Naive thymus-derived CD4-positive, alpha-beta T cell (primary cell): ENCODE measurements at regions of chr5 and their contacts with region 1.

Region 1: DNA sequence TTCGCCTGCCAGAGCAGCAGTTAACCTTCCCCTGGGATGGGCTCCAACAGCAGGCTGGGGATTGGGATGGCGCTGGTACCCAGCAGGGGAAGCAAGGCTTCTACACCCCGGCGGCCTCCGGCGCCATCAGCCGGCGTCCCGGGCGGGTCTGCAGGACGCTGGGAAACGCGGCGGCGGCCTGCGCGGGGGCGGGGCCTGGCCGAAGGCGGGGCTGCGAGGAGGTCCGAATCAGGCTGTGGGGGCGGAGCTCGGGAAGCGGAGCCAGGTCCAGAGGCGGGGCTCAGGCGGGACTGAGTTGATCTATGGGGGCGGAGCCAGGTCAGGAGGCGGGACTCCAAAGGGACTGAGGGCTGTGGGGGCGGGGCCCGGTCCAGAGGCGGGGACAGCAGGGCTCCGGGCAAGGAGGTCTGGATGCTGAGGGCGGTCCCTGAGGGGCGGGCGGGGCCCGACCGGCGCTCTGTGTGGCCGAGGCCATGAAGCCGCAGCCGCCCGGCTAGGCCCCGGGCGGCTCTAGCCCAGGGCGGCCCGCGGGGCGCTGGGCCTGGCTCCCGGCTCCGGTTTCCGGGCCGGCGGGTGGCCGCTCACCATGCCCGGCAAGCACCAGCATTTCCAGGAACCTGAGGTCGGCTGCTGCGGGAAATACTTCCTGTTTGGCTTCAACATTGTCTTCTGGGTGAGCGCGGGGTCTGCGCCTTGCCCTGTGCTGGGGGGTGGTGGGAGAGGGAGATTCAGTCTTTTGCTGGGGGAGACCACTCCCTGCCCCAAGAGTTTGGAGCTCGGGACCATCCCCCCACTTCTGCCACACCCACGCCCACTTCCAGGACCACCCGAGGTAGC is at the start of gene TSPAN17:
- DNase-seq: peak; percentile 87 to 99 (median 89)
- ATAC-seq: peak; percentile 97
- H3K4me3 ChIP-seq: peak within 1 kb of the TSS; percentile 50
- H3K4me3 Mint-ChIP-seq: peak within 1 kb of the TSS; percentile 79 to 94 (median 89)
- H3K27ac ChIP-seq: peak within 1 kb of the TSS; percentile 68
- H3K27ac Mint-ChIP-seq: peak within 1 kb of the TSS; percentile 79 to 95 (median 90)
- H3K4me1 ChIP-seq: peaks cover 21 to 28% of the 10 kb centered on the region in 2 donors
- H3K4me1 Mint-ChIP-seq: peaks cover 29 to 55% (median 45%) of the 10 kb centered on the region in 7 donors
- H3K27me3 ChIP-seq: no peaks in the 10 kb centered on the region
- H3K27me3 Mint-ChIP-seq: no peaks in the 10 kb centered on the region
- total RNA-seq, gene TSPAN17: 16.6 to 47.6 (median 21.1) TPM

Region 2: GRCh38 chr5:176388444-176389134 is 258.7 kb before region 1 on chr5 and contains the starts of genes HIGD2A and NOP16:
- CTCF ChIA-PET with region 1: no interaction called
- POLR2A ChIA-PET with region 1: no interaction called
- intact Hi-C with region 1: loop called in 1 of 2 experiments (anchors 1 kb)
- DNase-seq: peak; percentile 89 to 99 (median 98)
- ATAC-seq: peak; percentile 95
- H3K4me3 ChIP-seq: peak within 1 kb of the TSS; percentile 95
- H3K4me3 Mint-ChIP-seq: peak within 1 kb of the TSS; percentile 94 to 100 (median 99)
- H3K27ac ChIP-seq: peak within 1 kb of the TSS; percentile 93
- H3K27ac Mint-ChIP-seq: peak within 1 kb of the TSS; percentile 91 to 100 (median 99)
- H3K4me1 ChIP-seq: peaks cover 18% of the 10 kb centered on the region in 2 donors
- H3K4me1 Mint-ChIP-seq: peaks cover 14 to 42% (median 35%) of the 10 kb centered on the region in 7 donors
- H3K27me3 ChIP-seq: no peaks in the 10 kb centered on the region
- H3K27me3 Mint-ChIP-seq: no peaks in the 10 kb centered on the region
- total RNA-seq, gene HIGD2A: 86.8 to 124 (median 112) TPM
- total RNA-seq, gene NOP16: 12.8 to 35.3 (median 22.2) TPM

Region 3: GRCh38 chr5:176543428-176544173 is 103.6 kb before region 1 on chr5:
- CTCF ChIA-PET with region 1: no interaction called
- POLR2A ChIA-PET with region 1: interaction called, 3 read pairs
- intact Hi-C with region 1: loop called in 1 of 2 experiments (anchors 1 kb)
- DNase-seq: peak; percentile 60 to 84 (median 72)
- ATAC-seq: peak; percentile 79
- H3K4me3 ChIP-seq: peak overlapping the region; percentile 75
- H3K4me3 Mint-ChIP-seq: peak overlapping the region; percentile 90 to 96 (median 94)
- H3K27ac ChIP-seq: peak overlapping the region; percentile 88
- H3K27ac Mint-ChIP-seq: peak overlapping the region; percentile 80 to 97 (median 94)
- H3K4me1 ChIP-seq: peaks cover 46 to 51% of the 10 kb centered on the region in 2 donors
- H3K4me1 Mint-ChIP-seq: peaks cover 41 to 76% (median 69%) of the 10 kb centered on the region in 7 donors
- H3K27me3 ChIP-seq: no peaks in the 10 kb centered on the region
- H3K27me3 Mint-ChIP-seq: no peaks in the 10 kb centered on the region

Region 4: DNA sequence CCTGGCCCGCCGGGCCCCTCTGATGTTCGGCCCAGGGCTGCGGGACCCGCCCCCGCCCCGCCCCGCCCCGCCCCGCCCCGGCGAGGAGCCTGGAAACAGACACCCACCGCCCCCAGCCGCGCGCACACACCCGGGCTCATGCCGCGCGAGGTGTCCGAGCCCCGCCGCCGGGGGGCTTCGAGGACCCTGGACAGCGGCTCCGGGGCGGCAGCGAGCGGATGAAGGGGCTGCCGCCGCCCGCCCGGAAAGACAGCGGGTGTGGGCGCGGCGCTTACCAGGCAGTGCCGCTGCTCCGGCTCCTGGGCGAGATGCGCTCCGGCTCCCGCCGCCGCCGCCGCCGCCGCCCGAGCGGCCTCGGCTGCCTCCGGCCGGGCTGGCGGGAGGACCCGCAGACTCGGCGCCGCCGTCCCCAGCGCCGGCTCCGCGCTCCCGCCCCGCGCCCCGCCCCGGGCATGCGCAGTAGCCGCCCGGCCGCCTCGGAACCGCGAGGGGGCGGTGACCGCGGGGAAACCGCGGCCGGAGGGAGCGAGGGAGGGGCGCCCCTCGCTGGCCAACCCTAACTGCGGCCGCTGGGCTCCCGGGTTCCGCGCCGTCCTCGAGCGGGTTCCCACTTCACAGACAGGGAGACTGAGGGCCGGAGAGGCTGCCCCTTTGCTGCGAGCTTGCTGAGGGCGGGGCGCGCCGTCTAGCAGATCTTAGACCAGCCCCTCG is 37.4 kb before region 1 on chr5 and contains the start of gene GPRIN1:
- CTCF ChIA-PET with region 1: no interaction called
- POLR2A ChIA-PET with region 1: interaction called, 3 read pairs
- intact Hi-C with region 1: loop called (anchors 2 kb)
- DNase-seq: peak in 5 of 9 donors; percentile 15 to 85 (median 39)
- ATAC-seq: peak; percentile 72
- H3K4me3 ChIP-seq: no peak within 1 kb of the TSS
- H3K4me3 Mint-ChIP-seq: peak within 1 kb of the TSS; percentile 82 to 95 (median 90)
- H3K27ac ChIP-seq: no peak within 1 kb of the TSS
- H3K27ac Mint-ChIP-seq: peak within 1 kb of the TSS in 3 of 9 donors; percentile 21 to 77 (median 45)
- H3K4me1 ChIP-seq: peaks cover 3 to 4% of the 10 kb centered on the region in 2 donors
- H3K4me1 Mint-ChIP-seq: peaks cover 4 to 17% (median 12%) of the 10 kb centered on the region in 7 donors
- H3K27me3 ChIP-seq: peaks cover 3 to 5% of the 10 kb centered on the region in 2 donors
- H3K27me3 Mint-ChIP-seq: peaks cover 20 to 44% (median 28%) of the 10 kb centered on the region in 5 donors
- total RNA-seq, gene GPRIN1: 0.08 to 2.3 (median 0.32) TPM in 4 of 5 experiments, not detected in the other

Region 5: DNA sequence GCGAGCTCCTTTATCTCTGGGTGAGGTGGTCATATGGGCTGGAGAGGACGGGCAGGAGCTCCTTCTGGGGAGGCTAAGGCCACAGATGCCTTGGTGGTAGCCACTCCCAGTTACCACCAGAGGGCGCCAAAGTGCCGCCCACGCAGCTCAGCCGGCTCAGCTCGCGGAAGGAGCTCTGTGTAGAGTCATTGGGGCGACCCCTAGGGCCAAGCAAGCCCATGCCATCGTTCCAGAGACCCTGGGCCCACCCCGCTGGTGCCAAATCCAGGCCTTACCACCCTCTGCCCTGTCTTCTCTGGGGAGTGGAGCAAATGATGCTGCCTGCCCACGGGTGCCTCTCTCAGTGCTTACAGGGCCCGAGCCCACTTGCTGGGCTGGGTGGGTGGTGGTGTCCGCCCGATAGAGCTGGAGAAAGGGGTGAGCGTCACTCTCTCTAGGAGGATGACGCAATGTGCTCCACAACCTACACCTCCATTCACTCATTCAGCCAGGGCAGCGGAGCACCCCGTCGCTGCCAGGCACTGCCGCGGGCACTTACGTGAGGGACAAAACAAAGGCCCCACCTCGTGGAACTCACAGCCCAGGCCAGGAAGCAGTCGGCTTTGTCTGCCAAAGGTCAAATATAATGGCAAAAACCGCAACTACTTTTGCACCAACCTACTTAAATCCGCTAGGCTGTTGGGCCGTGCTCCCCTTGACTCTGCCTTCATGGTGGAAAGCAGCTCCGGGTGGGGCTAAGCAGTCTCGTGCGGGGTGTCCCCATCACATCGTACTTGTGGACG is 13.8 kb after region 1 on chr5:
- CTCF ChIA-PET with region 1: interaction called, 20 read pairs
- POLR2A ChIA-PET with region 1: interaction called, 36 read pairs
- intact Hi-C with region 1: loop called (anchors 1 kb)
- DNase-seq: peak; percentile 62 to 87 (median 75)
- ATAC-seq: peak; percentile 84
- H3K4me3 ChIP-seq: peak overlapping the region; percentile 13
- H3K4me3 Mint-ChIP-seq: peak overlapping the region in 5 of 10 donors; percentile 5 to 70 (median 59)
- H3K27ac ChIP-seq: no peak overlapping the region
- H3K27ac Mint-ChIP-seq: peak overlapping the region in 5 of 9 donors; percentile 49 to 72 (median 67)
- H3K4me1 ChIP-seq: peaks cover 25 to 31% of the 10 kb centered on the region in 2 donors
- H3K4me1 Mint-ChIP-seq: peaks cover 26 to 35% (median 33%) of the 10 kb centered on the region in 7 donors
- H3K27me3 ChIP-seq: no peaks in the 10 kb centered on the region
- H3K27me3 Mint-ChIP-seq: peaks cover 6 to 19% (median 11%) of the 10 kb centered on the region in 5 donors

Region 6: DNA sequence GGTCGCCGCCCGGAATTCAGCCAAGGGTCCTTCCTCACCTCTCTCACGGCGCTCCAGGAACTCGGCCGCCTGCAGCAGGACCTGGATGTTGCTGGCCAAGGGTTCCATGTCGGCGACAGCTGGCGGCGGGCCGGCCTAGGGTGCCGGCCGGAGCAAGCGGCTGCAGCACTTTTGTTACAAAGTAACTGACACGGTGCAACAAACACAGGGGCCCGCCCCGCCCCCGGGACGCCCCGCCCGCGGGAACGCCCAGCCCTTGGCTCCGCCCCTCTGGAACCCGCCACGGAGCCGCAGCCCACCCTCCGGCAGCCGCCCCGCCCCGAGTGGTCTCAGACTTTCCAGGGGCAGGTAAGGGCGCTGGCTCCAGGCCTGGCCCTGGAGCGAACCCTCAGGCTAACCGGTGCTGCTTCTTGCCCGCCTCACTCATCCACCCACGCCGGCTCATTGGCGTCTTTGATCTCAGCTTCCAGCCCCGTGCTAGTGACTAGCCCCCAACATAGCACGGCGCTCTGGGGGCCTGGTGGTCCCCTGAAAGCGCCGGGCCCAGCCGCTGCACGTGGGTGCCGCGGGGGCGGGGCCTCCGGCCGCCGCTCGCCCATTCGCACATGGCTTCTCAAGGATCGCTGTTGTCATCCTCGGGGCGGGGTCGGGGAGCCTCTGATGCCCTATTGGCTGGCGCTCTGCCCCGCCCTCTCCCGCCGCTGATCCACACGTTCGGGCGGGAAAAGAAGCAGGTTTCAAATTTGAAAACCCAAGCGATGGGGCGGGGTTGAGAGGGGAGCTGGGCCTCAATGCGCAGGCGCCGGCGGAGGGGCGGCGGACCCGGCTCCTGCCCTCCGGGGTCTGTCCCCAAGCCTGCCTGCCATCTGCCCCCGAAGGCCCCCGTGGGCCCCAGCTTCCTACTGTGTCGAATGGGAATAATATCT is 664.7 kb after region 1 on chr5 and contains the start of gene MXD3:
- CTCF ChIA-PET with region 1: no interaction called
- POLR2A ChIA-PET with region 1: no interaction called
- intact Hi-C with region 1: loop called in 1 of 2 experiments (anchors 10 kb)
- DNase-seq: peak; percentile 87 to 97 (median 92)
- ATAC-seq: peak; percentile 95
- H3K4me3 ChIP-seq: peak within 1 kb of the TSS; percentile 77
- H3K4me3 Mint-ChIP-seq: peak within 1 kb of the TSS; percentile 78 to 93 (median 84)
- H3K27ac ChIP-seq: peak within 1 kb of the TSS; percentile 51
- H3K27ac Mint-ChIP-seq: peak within 1 kb of the TSS in 6 of 9 donors; percentile 42 to 92 (median 59)
- H3K4me1 ChIP-seq: peaks cover 21 to 22% of the 10 kb centered on the region in 2 donors
- H3K4me1 Mint-ChIP-seq: peaks cover 11 to 49% (median 32%) of the 10 kb centered on the region in 7 donors
- H3K27me3 ChIP-seq: no peaks in the 10 kb centered on the region
- H3K27me3 Mint-ChIP-seq: peaks cover 0 to 5% (median 0%) of the 10 kb centered on the region in 5 donors
- total RNA-seq, gene MXD3: 8.8 to 39.8 (median 18.3) TPM